ENCODE measurements at regions of chr5 and their contacts with region 1.

Region 1: DNA sequence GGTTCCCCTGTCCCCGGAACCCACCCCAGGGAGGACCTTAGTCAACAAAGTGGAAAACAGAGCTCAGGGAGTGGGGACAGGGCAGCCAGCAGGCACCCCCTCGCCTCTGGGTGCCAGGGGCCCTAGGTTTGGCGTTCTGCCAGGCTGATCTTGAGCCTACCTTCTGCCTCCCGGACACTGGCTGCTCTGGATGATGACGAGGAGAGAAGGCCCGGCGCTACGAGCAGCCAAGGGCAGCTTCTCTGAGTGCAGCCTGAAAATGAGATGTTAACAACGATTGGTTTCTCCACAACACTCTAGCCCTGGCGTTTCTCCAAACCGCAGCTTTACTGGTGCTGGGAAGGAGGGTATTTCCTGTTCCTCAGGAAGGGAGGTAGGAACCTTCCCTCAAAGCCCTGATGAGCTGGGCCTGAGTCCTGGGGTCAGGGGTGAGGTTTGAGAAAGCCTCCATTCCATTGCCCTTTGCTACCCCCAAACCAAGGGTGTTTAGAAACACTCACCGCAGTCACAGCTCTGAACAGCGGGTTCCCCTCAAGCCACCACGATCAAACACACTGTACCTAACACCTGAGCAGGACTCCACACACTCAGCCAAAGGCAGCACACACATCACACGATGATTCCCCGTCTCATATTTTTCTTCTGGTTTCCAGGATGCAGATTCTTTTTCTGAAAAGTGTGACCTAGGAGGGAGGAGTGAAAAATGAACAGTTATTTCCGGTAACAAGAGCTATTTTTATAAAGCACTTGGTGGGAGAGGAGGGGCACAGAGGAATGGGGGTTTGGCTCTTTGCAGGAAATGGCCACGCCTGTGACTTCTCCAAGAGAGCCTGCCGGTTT is at the start of gene STING1:
- DNase-seq: peak; percentile 97
- H3K4me3 ChIP-seq: peak within 1 kb of the TSS; percentile 19 to 44 (median 37)
- H3K27ac ChIP-seq: peak within 1 kb of the TSS; percentile 58
- H3K4me1 ChIP-seq: peaks cover 22% of the 10 kb centered on the region
- H3K27me3 ChIP-seq: no peaks in the 10 kb centered on the region
- CTCF ChIP-seq: no peak
- total RNA-seq, gene STING1: 10.7 to 36.6 TPM

Region 2: GRCh38 chr5:139137702-139138101 is 344.6 kb before region 1 on chr5:
- CTCF ChIA-PET with region 1: no interaction called
- dilution Hi-C with region 1: no loop called
- in situ Hi-C with region 1: no loop called
- intact Hi-C with region 1: no loop called
- DNase-seq: peak; percentile 52
- H3K4me3 ChIP-seq: no peak overlapping the region
- H3K27ac ChIP-seq: no peak overlapping the region
- H3K4me1 ChIP-seq: peaks cover 20% of the 10 kb centered on the region
- H3K27me3 ChIP-seq: no peaks in the 10 kb centered on the region
- CTCF ChIP-seq: peak in 1 of 2 donors; percentile 32

Region 3: DNA sequence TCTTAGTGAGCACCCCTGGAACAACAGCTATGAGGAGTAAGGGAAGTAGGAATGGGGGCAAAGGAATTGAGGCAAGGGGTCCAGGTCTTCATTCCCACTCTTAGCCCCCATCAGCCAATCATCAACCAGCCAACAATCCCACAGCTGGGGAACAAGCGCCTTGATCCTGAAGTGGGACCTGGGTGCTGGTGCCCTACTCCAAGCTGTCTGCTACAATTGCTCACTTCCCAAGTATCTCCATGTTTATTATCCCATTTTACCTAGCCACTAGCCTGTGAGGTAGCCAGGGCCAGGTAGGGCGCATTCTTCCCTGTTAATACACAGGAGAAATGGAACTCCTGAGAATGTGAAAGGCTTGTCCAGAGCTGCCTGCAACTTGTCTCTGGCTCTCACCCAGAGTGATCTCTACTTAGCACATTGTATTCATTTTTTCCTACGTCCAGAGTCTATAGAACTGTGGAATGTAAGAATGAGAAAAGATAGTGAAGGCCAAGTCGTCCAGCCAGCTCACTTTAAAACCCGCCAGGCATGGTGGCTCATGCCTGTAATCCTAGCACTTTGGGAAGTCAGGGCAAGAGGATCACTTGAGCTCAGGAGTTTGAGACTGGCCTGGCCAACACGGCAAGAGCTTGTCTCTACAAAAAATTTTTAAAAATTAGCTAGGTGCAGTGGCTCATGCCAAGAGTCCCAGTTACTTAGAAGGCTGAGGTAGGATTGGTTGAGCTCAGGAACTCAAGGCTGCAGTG is 36.8 kb before region 1 on chr5:
- CTCF ChIA-PET with region 1: interaction called, 7 read pairs
- dilution Hi-C with region 1: no loop called
- in situ Hi-C with region 1: no loop called
- intact Hi-C with region 1: loop called (anchors 1 kb)
- DNase-seq: peak; percentile 80
- H3K4me3 ChIP-seq: no peak overlapping the region
- H3K27ac ChIP-seq: peak overlapping the region; percentile 78
- H3K4me1 ChIP-seq: peaks cover 41% of the 10 kb centered on the region
- H3K27me3 ChIP-seq: no peaks in the 10 kb centered on the region
- CTCF ChIP-seq: no peak

Measured in mammary epithelial cell (primary cell).